Endothelial cell of umbilical vein (primary cell): ENCODE measurements at regions of chr15 and their contacts with region 1.

Region 1: DNA sequence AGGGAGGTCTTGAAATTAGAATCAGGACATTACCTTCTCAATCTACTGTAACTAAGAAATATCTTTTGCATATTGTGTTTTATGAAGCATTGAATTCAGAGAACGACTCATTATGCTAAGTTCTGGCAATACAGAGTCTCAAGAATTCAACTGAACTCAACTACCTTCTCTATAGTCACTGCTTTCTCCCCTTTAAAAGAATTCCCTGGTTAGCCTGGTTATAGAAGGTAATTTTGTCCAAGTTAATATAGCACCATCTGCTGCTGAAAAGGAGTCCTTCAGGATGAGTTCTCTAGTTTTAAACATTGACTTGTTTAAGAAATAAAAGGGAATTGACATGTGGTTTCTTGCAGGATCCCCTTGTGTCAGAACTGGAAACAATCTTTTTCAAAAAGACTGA is 60.2 kb downstream of the IL16 start:
- DNase-seq: peak; percentile 34
- H3K4me3 ChIP-seq: no peak overlapping the region
- H3K27ac ChIP-seq: no peak overlapping the region
- H3K4me1 ChIP-seq: no peaks in the 10 kb centered on the region
- H3K27me3 ChIP-seq: peaks cover 4 to 8% of the 10 kb centered on the region in 2 experiments
- CTCF ChIP-seq: no peak
- POLR2A ChIP-seq: no peak

Region 2: DNA sequence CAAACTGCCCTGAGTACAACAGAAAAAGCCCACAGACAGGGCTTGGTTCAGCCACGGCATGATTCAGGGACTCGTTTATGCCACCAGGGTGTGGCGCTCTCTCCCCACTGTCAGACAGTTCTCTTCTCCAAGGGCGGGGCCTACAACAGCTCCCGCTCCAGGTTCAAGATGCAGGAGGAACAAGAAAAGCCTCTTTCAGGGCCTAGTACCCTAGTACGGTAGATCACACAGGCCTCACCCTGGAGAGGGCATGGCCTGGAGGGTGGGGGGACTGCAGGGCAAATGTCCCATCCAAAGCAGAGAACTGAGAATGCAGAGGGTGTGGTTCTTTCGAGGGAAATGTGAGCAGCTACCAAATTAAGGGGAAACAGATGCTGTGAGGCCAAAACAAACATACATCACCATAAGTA is 279.3 kb before region 1 on chr15:
- CTCF ChIA-PET with region 1: interaction called, 12 read pairs
- POLR2A ChIA-PET with region 1: no interaction called
- dilution Hi-C with region 1: no loop called
- intact Hi-C with region 1: no loop called
- DNase-seq: peak; percentile 62
- H3K4me3 ChIP-seq: no peak overlapping the region
- H3K27ac ChIP-seq: no peak overlapping the region
- H3K4me1 ChIP-seq: peaks cover 10% of the 10 kb centered on the region
- H3K27me3 ChIP-seq: no peaks in the 10 kb centered on the region
- CTCF ChIP-seq: peak; percentile 63 to 83
- POLR2A ChIP-seq: no peak

Region 3: DNA sequence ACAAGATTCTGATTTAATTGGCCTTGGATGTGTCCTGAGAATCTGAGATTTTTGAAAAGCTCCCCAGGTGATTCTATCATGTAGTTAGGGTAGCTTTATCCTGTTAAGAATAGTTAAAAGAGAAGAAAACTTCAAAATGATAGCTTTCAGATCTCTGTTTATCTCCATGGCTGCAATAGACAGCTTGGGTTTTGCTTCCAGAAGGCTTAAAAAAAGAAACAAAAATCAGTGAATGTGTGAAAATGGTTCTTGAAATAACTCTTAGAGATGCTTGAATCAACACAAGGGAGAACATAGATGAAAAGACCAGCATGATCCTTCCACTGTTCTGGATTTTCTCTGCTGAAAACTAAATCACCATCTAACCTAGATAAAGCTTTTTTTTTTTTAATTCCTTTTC is 177.9 kb after region 1 on chr15:
- CTCF ChIA-PET with region 1: no interaction called
- POLR2A ChIA-PET with region 1: no interaction called
- dilution Hi-C with region 1: no loop called
- intact Hi-C with region 1: no loop called
- DNase-seq: no peak
- H3K4me3 ChIP-seq: no peak overlapping the region
- H3K27ac ChIP-seq: no peak overlapping the region
- H3K4me1 ChIP-seq: no peaks in the 10 kb centered on the region
- H3K27me3 ChIP-seq: no peaks in the 10 kb centered on the region
- CTCF ChIP-seq: no peak
- POLR2A ChIP-seq: no peak

Region 4: GRCh38 chr15:81531109-81531592 is 274.2 kb after region 1 on chr15:
- CTCF ChIA-PET with region 1: no interaction called
- POLR2A ChIA-PET with region 1: no interaction called
- dilution Hi-C with region 1: no loop called
- intact Hi-C with region 1: no loop called
- DNase-seq: peak; percentile 98
- H3K4me3 ChIP-seq: peak overlapping the region in 1 of 3 experiments; percentile 11
- H3K27ac ChIP-seq: peak overlapping the region; percentile 70
- H3K4me1 ChIP-seq: peaks cover 26% of the 10 kb centered on the region
- H3K27me3 ChIP-seq: no peaks in the 10 kb centered on the region
- CTCF ChIP-seq: no peak
- POLR2A ChIP-seq: peak; percentile 67